ENCODE measurements at regions of chr19 and their contacts with region 1.

Region 1: GRCh38 chr19:18388100-18388959 is 2.4 kb downstream of the GDF15 start:
- DNase-seq: peak; percentile 87
- ATAC-seq: peak; percentile 82
- H3K4me3 Mint-ChIP-seq: peak overlapping the region; percentile 76
- H3K27ac Mint-ChIP-seq: no peak overlapping the region
- H3K4me1 Mint-ChIP-seq: peaks cover 45% of the 10 kb centered on the region
- H3K27me3 Mint-ChIP-seq: peaks cover 6% of the 10 kb centered on the region
- CTCF ChIP-seq: peak; percentile 92

Region 2: DNA sequence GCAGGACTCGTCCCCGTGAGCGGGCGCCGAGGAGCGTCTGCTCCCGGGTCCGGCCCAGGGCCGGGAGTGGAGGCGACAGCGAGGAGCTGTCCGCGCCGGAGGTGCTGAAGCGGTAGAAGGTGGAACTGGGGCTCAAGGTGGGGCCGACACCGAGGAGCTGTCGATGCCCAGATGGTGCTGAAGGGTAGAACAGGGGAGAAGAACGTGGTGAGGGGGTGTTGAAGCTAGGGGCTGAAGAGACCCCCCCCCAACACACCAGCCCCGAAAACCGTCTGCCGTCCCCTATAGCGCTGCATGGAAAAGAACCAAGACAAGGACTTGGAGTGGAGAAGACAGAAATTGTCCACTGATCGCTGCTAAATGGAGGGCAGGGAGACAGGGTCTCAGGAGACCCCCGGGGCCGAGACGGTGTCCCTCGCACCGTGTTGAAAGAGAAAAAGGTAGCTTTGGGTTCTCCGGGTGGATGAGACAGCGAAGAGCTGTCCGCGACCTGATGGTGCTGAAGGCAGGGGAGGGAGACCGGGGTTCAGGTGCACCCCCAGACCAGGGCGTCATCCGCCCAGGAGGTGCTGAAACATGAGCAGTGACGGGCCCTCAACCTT is 155.0 kb before region 1 on chr19:
- CTCF ChIA-PET with region 1: no interaction called
- POLR2A ChIA-PET with region 1: no interaction called
- intact Hi-C with region 1: no loop called
- DNase-seq: peak; percentile 53
- ATAC-seq: peak; percentile 85
- H3K4me3 Mint-ChIP-seq: no peak overlapping the region
- H3K27ac Mint-ChIP-seq: peak overlapping the region; percentile 50
- H3K4me1 Mint-ChIP-seq: peaks cover 17% of the 10 kb centered on the region
- H3K27me3 Mint-ChIP-seq: peaks cover 52% of the 10 kb centered on the region
- CTCF ChIP-seq: no peak

Region 3: DNA sequence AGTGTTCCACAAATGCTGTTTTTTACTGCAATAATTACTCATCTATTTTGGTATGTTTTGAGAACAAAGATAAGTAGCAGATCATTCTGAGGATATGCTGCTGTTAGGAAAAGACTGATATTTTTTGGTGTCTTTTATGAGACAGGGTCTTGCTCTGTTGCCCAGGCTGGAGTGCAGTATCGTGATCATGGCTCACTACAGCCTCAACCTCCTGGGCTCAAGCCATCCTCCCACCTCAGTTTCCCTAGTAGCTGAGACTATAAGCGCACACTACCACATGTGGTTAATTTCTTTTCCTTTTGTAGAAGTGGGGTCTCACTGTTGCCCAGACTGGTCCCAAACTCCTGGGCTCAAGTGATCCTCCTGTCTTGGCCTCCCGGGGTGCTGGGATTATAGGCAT is 74.9 kb before region 1 on chr19:
- CTCF ChIA-PET with region 1: no interaction called
- POLR2A ChIA-PET with region 1: no interaction called
- intact Hi-C with region 1: no loop called
- DNase-seq: no peak
- ATAC-seq: no peak
- H3K4me3 Mint-ChIP-seq: no peak overlapping the region
- H3K27ac Mint-ChIP-seq: no peak overlapping the region
- H3K4me1 Mint-ChIP-seq: peaks cover 23% of the 10 kb centered on the region
- H3K27me3 Mint-ChIP-seq: no peaks in the 10 kb centered on the region
- CTCF ChIP-seq: no peak

Region 4: GRCh38 chr19:18349524-18350128 is 38.7 kb before region 1 on chr19:
- CTCF ChIA-PET with region 1: interaction called, 9 read pairs
- POLR2A ChIA-PET with region 1: no interaction called
- intact Hi-C with region 1: loop called (anchors 5 kb)
- DNase-seq: peak; percentile 28
- ATAC-seq: peak; percentile 52
- H3K4me3 Mint-ChIP-seq: no peak overlapping the region
- H3K27ac Mint-ChIP-seq: no peak overlapping the region
- H3K4me1 Mint-ChIP-seq: no peaks in the 10 kb centered on the region
- H3K27me3 Mint-ChIP-seq: no peaks in the 10 kb centered on the region
- CTCF ChIP-seq: no peak

Region 5: DNA sequence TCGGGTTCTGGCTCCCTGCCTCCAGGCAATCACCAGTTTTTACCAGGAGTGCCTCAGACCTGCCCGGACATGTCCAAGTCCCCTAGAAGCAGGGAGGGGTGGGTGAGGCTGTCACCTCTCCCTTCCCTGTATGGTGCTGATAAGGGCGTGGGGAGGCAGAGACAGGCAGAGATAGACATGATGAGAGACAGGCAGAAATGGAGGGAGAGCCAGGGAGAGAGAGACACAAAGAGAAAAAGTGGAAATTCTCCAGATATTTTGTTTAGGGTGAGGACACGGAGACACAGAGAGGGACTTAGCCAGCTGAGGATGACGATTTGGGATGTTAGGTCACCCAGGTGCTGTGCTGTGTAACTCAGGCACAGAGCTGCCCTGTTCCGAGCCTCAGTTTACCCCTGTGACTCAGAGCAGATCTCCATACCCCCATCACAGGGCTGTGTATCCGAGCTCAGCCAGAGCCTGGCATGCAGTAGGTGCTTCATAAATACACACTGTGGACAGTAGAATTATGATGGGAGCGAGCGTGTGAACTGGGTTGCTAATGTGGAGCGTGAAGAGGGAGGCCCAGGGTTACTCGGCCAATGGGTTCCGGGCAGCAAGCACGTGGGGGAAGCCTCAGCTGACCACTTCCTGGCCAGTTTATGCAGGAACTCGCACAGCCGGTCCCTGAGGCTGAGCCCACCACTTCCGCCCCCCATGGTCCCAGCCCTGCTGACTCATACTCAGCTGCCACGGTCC is 14.3 kb before region 1 on chr19:
- CTCF ChIA-PET with region 1: interaction called, 4 read pairs
- POLR2A ChIA-PET with region 1: interaction called, 4 read pairs
- intact Hi-C with region 1: loop called (anchors 2 kb)
- DNase-seq: peak; percentile 50
- ATAC-seq: peak; percentile 86
- H3K4me3 Mint-ChIP-seq: peak overlapping the region; percentile 7
- H3K27ac Mint-ChIP-seq: peak overlapping the region; percentile 41
- H3K4me1 Mint-ChIP-seq: peaks cover 25% of the 10 kb centered on the region
- H3K27me3 Mint-ChIP-seq: no peaks in the 10 kb centered on the region
- CTCF ChIP-seq: no peak

Region 6: GRCh38 chr19:18401580-18402112 is 13.3 kb after region 1 on chr19:
- CTCF ChIA-PET with region 1: interaction called, 12 read pairs
- POLR2A ChIA-PET with region 1: interaction called, 18 read pairs
- intact Hi-C with region 1: loop called (anchors 1 kb)
- DNase-seq: peak; percentile 50
- ATAC-seq: peak; percentile 74
- H3K4me3 Mint-ChIP-seq: peak overlapping the region; percentile 70
- H3K27ac Mint-ChIP-seq: peak overlapping the region; percentile 88
- H3K4me1 Mint-ChIP-seq: peaks cover 52% of the 10 kb centered on the region
- H3K27me3 Mint-ChIP-seq: no peaks in the 10 kb centered on the region
- CTCF ChIP-seq: no peak

Region 7: DNA sequence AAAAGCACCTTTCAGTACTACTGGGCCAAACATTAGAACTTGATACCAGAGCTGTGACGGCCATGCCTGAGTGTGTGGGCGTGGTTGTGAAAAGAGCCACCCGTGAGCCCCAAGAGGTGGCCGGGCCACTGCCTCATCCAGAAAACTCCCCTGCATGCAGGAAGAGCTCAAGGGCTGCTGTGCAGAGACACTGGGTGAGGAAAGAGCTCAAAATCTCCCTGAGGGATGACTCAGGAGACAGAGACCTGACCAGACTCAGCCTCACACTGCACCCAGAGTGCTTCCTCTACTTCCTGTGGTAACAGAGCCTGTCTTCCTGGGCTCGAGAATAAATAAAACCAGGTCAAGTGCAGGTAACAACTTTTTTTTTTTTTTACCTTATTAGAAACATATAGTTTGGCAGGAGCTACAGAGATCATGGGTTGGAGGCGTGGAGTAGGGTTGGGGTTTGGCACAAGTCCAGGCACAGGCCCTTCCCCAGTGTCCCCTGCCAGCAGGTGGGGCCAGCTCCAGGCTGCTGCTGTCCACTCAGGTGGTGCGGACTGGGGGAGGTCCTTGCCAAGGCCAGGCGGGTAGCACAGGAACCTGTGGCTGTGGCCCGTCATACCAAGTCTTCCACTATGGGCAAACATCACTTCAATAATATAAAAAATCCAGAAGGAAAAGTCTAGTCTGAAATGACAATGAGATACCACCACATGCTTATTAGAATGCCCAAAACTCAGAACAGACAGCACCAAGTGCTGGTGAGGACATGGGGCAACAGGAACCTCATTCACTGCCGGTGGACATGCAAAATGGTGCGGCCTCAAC is 108.0 kb after region 1 on chr19:
- CTCF ChIA-PET with region 1: no interaction called
- POLR2A ChIA-PET with region 1: no interaction called
- intact Hi-C with region 1: no loop called
- DNase-seq: no peak
- ATAC-seq: peak; percentile 61
- H3K4me3 Mint-ChIP-seq: no peak overlapping the region
- H3K27ac Mint-ChIP-seq: no peak overlapping the region
- H3K4me1 Mint-ChIP-seq: peaks cover 71% of the 10 kb centered on the region
- H3K27me3 Mint-ChIP-seq: no peaks in the 10 kb centered on the region
- CTCF ChIP-seq: no peak